ENCODE measurements at regions of chr11 and their contacts with region 1.

Region 1: GRCh38 chr11:6531267-6531752 is 34.2 kb downstream of the DNHD1 start:
- DNase-seq: peak; percentile 37
- H3K4me3 Mint-ChIP-seq: no peak overlapping the region
- H3K27ac Mint-ChIP-seq: no peak overlapping the region
- H3K4me1 Mint-ChIP-seq: peaks cover 13% of the 10 kb centered on the region
- H3K27me3 Mint-ChIP-seq: no peaks in the 10 kb centered on the region

Region 2: GRCh38 chr11:6520265-6520664 is 11.0 kb before region 1 on chr11:
- CTCF ChIA-PET with region 1: interaction called, 15 read pairs
- DNase-seq: no peak
- H3K4me3 Mint-ChIP-seq: no peak overlapping the region
- H3K27ac Mint-ChIP-seq: no peak overlapping the region
- H3K4me1 Mint-ChIP-seq: peaks cover 14% of the 10 kb centered on the region
- H3K27me3 Mint-ChIP-seq: no peaks in the 10 kb centered on the region

Region 3: DNA sequence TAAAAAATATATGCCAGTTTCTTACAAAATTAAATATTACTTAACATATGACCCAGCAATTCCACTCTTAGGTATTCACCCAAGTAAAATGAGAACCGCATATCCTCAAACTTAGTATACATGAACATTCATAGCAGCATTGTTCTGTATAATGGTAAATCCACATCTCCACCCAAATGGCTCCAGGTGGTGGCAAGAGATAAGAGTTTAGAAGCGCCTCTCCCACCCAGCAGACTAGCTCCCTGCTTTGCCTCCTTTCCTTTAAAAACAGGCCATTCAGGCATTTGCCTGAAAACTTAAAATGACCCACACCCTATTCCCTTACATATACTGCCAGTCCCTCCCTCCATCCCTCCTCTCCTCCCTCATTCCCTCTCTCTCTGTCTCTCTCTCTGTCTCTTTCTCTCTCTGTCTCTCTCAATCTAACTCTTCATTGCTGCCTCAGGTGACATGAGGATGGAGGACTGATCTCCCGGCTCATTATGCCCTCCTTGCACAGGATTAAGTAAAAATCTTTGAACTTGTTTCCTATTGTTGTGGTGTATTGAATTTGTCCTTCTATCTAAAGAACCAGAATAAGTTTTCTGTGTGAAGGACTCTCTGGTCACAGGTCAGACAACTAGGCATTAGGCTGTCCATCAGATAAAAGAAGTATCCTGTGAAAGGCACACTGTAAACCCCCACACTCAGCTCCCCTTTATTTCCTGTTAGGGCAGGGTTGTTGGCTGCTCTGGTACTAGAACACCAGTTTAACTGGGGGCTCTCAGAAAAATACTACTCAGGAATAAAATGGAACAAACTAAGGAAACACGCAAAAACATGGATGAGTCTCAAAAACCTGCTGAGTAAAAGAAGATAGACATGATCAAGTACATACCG is 23.8 kb after region 1 on chr11:
- CTCF ChIA-PET with region 1: no interaction called
- DNase-seq: no peak
- H3K4me3 Mint-ChIP-seq: no peak overlapping the region
- H3K27ac Mint-ChIP-seq: no peak overlapping the region
- H3K4me1 Mint-ChIP-seq: no peaks in the 10 kb centered on the region
- H3K27me3 Mint-ChIP-seq: no peaks in the 10 kb centered on the region

Region 4: GRCh38 chr11:6603287-6604080 is 72.2 kb after region 1 on chr11 and contains the starts of genes ILK and RRP8:
- CTCF ChIA-PET with region 1: interaction called, 19 read pairs
- DNase-seq: peak; percentile 92
- H3K4me3 Mint-ChIP-seq: no peak within 1 kb of the TSS
- H3K27ac Mint-ChIP-seq: no peak within 1 kb of the TSS
- H3K4me1 Mint-ChIP-seq: no peaks in the 10 kb centered on the region
- H3K27me3 Mint-ChIP-seq: no peaks in the 10 kb centered on the region

Region 5: GRCh38 chr11:6682936-6683861 is 151.9 kb after region 1 on chr11 and contains the start of gene MRPL17:
- CTCF ChIA-PET with region 1: interaction called, 50 read pairs
- DNase-seq: peak; percentile 100
- H3K4me3 Mint-ChIP-seq: peak within 1 kb of the TSS; percentile 98
- H3K27ac Mint-ChIP-seq: peak within 1 kb of the TSS; percentile 96
- H3K4me1 Mint-ChIP-seq: peaks cover 29% of the 10 kb centered on the region
- H3K27me3 Mint-ChIP-seq: no peaks in the 10 kb centered on the region

Region 6: DNA sequence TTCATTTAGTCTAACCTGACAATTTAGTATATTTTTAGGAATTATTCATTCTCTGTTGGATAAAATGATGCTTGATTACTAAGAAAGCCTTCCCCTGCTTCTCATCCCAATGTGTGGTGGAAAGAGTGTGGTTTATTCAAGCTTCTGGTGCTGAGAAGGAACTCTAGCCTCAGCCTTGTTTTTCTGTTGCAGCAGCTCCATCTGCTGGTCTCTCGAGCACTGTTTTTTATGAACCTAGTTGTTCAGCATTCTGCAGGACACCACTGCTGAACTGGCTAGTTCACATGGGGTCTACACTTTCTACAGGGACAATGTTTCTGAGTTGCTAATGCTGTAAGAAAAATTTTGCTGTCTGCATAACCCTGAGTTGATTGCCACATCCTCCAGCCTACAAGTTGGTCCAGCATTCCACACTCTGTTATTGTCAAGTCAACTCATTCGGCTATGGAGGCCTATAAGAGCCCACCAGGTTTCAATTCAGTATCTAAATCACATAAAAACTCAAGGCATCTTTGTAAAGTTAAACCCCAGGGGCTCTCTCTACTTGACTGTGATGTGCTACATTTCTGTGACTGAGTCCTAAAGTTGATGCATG is 226.2 kb after region 1 on chr11:
- CTCF ChIA-PET with region 1: interaction called, 12 read pairs
- DNase-seq: peak; percentile 78
- H3K4me3 Mint-ChIP-seq: no peak overlapping the region
- H3K27ac Mint-ChIP-seq: no peak overlapping the region
- H3K4me1 Mint-ChIP-seq: peaks cover 2% of the 10 kb centered on the region
- H3K27me3 Mint-ChIP-seq: no peaks in the 10 kb centered on the region